ENCODE measurements at regions of chr3 and their contacts with region 1.

Region 1: GRCh38 chr3:14261229-14261628 is 82.6 kb downstream of the LSM3 start:
- DNase-seq: peak; percentile 61
- ATAC-seq: peak; percentile 90
- H3K4me3 ChIP-seq: no peak overlapping the region
- H3K27ac ChIP-seq: no peak overlapping the region
- H3K4me1 ChIP-seq: peaks cover 6% of the 10 kb centered on the region
- H3K27me3 ChIP-seq: peaks cover 1 to 28% of the 10 kb centered on the region in 2 experiments; a peak in 4 of 5 replicates
- CTCF ChIP-seq: peak; percentile 94
- EP300 ChIP-seq: no peak
- POLR2A ChIP-seq: no peak
- RAD21 ChIP-seq: peak; percentile 93

Region 2: DNA sequence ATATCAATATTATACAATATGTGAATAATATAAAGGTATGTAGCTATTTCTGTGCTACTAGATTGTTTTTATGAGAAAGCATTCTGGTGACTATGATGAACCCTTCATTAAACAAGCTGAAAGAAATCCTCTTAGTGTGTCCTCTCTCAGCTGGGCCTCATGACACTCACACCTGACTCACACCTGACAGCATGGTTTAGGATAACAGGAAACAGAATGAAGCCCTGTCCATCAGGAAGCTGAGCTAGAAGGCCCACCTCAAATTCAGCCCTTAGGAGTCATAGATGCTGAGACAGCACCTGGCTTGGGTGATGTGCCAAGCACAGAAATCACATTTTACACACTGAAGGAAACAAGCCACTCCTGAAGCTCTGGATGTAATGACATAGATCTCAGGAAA is 167.4 kb before region 1 on chr3:
- CTCF ChIA-PET with region 1: no interaction called
- POLR2A ChIA-PET with region 1: no interaction called
- in situ Hi-C with region 1: no loop called
- intact Hi-C with region 1: no loop called
- DNase-seq: no peak
- ATAC-seq: no peak
- H3K4me3 ChIP-seq: no peak overlapping the region
- H3K27ac ChIP-seq: no peak overlapping the region
- H3K4me1 ChIP-seq: peaks cover 10% of the 10 kb centered on the region
- H3K27me3 ChIP-seq: peaks cover 0 to 10% of the 10 kb centered on the region in 2 experiments; a peak in 2 of 5 replicates
- CTCF ChIP-seq: no peak
- EP300 ChIP-seq: no peak
- POLR2A ChIP-seq: no peak
- RAD21 ChIP-seq: no peak

Region 3: GRCh38 chr3:14371573-14372474 is 110.6 kb after region 1 on chr3:
- CTCF ChIA-PET with region 1: interaction called, 3 read pairs
- POLR2A ChIA-PET with region 1: no interaction called
- in situ Hi-C with region 1: loop called (anchors 10 kb)
- intact Hi-C with region 1: loop called (anchors 1 kb)
- DNase-seq: peak; percentile 76
- ATAC-seq: peak; percentile 41
- H3K4me3 ChIP-seq: no peak overlapping the region
- H3K27ac ChIP-seq: no peak overlapping the region
- H3K4me1 ChIP-seq: peaks cover 38% of the 10 kb centered on the region
- H3K27me3 ChIP-seq: peaks cover 3 to 34% of the 10 kb centered on the region in 2 experiments; a peak in 3 of 5 replicates
- CTCF ChIP-seq: no peak
- EP300 ChIP-seq: no peak
- POLR2A ChIP-seq: no peak
- RAD21 ChIP-seq: no peak

Region 4: DNA sequence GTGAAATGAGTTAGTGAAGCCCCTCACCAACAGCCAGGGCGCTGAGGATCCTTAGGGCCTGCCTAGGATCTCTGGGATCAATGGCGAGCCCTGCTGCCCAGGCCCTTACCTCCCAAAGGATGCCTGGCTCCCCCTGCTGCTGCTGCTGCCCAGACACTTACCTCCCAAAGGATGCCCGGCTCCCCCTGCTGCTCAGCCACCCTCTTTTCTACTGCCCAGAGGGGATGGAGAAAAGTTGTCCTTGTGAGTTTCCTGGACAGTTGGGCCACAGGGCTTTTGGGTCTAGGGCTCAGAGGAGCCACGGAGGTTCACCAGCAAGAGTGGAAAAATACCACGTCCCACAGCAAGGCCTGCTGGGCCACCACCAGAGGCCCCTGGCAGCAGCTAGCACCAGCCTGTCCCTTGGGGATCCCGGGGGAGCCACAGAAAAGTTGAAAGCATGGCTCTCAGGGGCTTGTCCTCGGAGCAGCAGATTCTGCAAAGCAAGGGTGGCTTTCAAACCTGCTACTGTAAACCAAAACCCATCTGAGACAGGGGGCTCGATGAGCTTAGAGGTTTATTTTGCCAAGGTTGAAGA is 200.6 kb after region 1 on chr3:
- CTCF ChIA-PET with region 1: interaction called, 41 read pairs
- POLR2A ChIA-PET with region 1: no interaction called
- in situ Hi-C with region 1: loop called (anchors 5 kb)
- intact Hi-C with region 1: loop called (anchors 1 kb)
- DNase-seq: peak; percentile 50
- ATAC-seq: peak; percentile 92
- H3K4me3 ChIP-seq: no peak overlapping the region
- H3K27ac ChIP-seq: no peak overlapping the region
- H3K4me1 ChIP-seq: no peaks in the 10 kb centered on the region
- H3K27me3 ChIP-seq: no peaks in the 10 kb centered on the region
- CTCF ChIP-seq: peak; percentile 87
- EP300 ChIP-seq: no peak
- POLR2A ChIP-seq: no peak
- RAD21 ChIP-seq: peak; percentile 94

Region 5: DNA sequence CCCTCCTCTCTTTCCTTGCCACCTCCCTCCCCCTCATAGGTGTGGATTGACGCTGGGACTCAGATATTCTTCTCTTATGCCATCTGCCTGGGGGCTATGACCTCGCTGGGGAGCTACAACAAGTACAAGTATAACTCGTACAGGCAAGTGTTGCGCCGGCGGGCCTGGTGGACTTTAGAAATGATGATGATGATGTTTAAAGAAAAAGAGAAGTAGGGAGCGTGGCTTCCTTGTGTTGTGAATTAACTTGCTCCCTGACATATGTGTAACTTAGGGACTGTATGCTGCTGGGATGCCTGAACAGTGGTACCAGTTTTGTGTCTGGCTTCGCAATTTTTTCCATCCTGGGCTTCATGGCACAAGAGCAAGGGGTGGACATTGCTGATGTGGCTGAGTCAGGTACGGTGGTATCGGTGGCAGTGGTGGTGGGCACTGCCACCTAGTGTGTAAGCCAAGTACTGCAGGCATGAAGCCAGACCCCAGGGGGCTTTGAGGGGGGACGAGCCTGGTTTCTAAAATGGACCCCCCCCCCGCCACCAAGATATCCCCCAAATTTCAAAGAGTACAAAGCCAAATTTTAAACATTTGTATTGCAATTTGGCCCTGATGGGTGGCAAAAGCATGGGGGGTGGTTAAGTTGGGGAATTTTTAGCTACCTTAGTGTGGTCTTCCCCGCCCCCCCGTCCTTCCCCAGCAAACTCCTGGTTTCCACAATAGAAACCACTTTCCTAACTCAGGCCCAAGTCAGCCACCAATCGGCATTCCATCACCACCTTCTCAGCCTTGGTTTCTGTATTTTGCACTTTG is 206.8 kb after region 1 on chr3:
- CTCF ChIA-PET with region 1: interaction called, 33 read pairs
- POLR2A ChIA-PET with region 1: no interaction called
- in situ Hi-C with region 1: loop called (anchors 5 kb)
- intact Hi-C with region 1: loop called (anchors 1 kb)
- DNase-seq: peak; percentile 8
- ATAC-seq: peak; percentile 73
- H3K4me3 ChIP-seq: no peak overlapping the region
- H3K27ac ChIP-seq: no peak overlapping the region
- H3K4me1 ChIP-seq: no peaks in the 10 kb centered on the region
- H3K27me3 ChIP-seq: no peaks in the 10 kb centered on the region
- CTCF ChIP-seq: peak; percentile 87
- EP300 ChIP-seq: no peak
- POLR2A ChIP-seq: no peak
- RAD21 ChIP-seq: peak; percentile 87

Region 6: GRCh38 chr3:14548321-14548729 is 287.1 kb after region 1 on chr3:
- CTCF ChIA-PET with region 1: interaction called, 4 read pairs
- POLR2A ChIA-PET with region 1: no interaction called
- in situ Hi-C with region 1: no loop called
- intact Hi-C with region 1: loop called (anchors 1 kb)
- DNase-seq: peak; percentile 56
- ATAC-seq: peak; percentile 95
- H3K4me3 ChIP-seq: no peak overlapping the region
- H3K27ac ChIP-seq: no peak overlapping the region
- H3K4me1 ChIP-seq: peaks cover 8% of the 10 kb centered on the region
- H3K27me3 ChIP-seq: peaks cover 3 to 5% of the 10 kb centered on the region in 2 experiments; a peak in 2 of 5 replicates
- CTCF ChIP-seq: peak; percentile 87
- EP300 ChIP-seq: no peak
- POLR2A ChIP-seq: no peak
- RAD21 ChIP-seq: peak; percentile 68